Panc1 (cell line): ENCODE measurements at regions of chr2 and their contacts with region 1.

Region 1: GRCh38 chr2:120150040-120150482 is 73.1 kb downstream of the TMEM185B start:
- DNase-seq: no peak
- ATAC-seq: no peak
- H3K4me3 ChIP-seq: no peak overlapping the region
- H3K27ac ChIP-seq: no peak overlapping the region
- H3K4me1 ChIP-seq: no peaks in the 10 kb centered on the region
- H3K27me3 ChIP-seq: no peaks in the 10 kb centered on the region
- CTCF ChIP-seq: no peak

Region 2: GRCh38 chr2:120123090-120123489 is 27.0 kb before region 1 on chr2:
- CTCF ChIA-PET with region 1: interaction called, 17 read pairs
- POLR2A ChIA-PET with region 1: no interaction called
- in situ Hi-C with region 1: no loop called
- intact Hi-C with region 1: no loop called
- DNase-seq: no peak
- ATAC-seq: no peak
- H3K4me3 ChIP-seq: no peak overlapping the region
- H3K27ac ChIP-seq: no peak overlapping the region
- H3K4me1 ChIP-seq: no peaks in the 10 kb centered on the region
- H3K27me3 ChIP-seq: no peaks in the 10 kb centered on the region
- CTCF ChIP-seq: no peak